Right cardiac atrium (tissue), 5 donors: ENCODE measurements at regions of chr17 and their contacts with region 1.

Region 1: GRCh38 chr17:77892469-77893143 is 65.9 kb upstream of the TNRC6C start:
- DNase-seq: peak in 2 of 3 donors; percentile 45 to 57
- ATAC-seq: no peak
- H3K4me3 ChIP-seq: no peak overlapping the region
- H3K27ac ChIP-seq: no peak overlapping the region
- H3K4me1 ChIP-seq: no peaks in the 10 kb centered on the region
- H3K27me3 ChIP-seq: no peaks in the 10 kb centered on the region

Region 2: DNA sequence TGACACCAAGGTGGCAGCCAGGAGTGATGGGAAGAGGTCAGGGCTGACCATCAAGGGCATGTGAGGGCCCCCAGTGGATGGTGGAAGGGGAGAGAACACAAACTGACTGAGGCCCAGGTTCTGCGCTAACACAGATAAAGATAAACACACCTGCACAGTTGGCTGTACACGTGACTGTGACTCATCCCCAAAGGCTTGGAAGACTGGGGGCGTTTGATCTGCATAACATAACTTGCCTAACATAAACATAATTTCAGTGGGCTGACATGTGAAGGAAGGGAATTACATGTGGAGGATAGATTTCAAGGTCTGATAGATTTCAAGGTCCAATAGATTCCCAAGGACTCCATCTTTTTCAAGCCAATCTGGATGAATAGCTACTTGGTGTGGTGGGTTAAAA is 35.0 kb before region 1 on chr17:
- intact Hi-C with region 1: no loop called
- DNase-seq: no peak
- ATAC-seq: no peak
- H3K4me3 ChIP-seq: no peak overlapping the region
- H3K27ac ChIP-seq: no peak overlapping the region
- H3K4me1 ChIP-seq: no peaks in the 10 kb centered on the region
- H3K27me3 ChIP-seq: no peaks in the 10 kb centered on the region

Region 3: DNA sequence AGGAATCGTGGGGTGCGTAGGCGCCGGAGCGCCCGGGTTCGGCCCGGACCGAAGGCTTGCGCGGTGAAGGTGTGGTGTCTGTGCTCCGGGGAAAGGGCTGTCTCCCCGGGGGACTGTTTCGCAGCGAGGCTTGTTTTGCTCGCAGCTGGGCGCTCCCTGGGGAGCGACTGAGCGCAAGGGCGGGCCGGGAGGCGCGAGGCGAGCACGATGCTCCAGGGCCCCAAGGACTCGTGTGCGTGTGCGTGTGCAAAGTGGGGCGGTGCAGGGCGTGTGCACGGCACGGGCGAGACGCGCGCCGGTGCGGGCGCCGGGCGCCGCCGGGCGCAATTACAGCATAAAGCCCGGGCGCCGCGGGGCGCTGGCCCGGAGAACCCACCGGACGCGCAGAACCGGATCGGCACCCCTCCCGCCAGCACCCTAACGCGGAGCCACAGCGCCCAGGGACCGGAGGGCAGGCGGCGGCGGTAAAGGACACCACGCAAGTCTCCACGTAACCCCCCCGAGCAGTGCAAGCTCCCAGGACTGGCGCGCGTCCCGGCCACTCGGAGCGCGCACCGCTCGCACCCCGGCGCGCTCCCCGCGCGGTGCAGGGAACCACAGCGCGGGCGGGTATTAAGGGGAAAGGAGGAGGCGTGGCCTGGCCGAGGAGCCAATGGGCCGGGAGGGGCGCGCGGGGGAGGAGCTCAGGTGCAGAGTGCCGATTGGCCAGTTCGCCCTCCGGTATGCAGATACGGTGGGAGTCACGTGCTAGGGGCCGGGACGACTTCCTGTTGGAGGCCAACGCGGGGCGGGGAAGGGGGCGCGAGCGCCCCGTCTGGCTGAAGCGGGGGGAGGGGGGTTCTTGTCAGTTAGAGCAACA is 65.5 kb after region 1 on chr17 and contains the start of gene TNRC6C:
- intact Hi-C with region 1: loop called in 1 of 4 experiments (anchors 5 kb)
- DNase-seq: peak; percentile 100
- ATAC-seq: peak; percentile 99
- H3K4me3 ChIP-seq: peak within 1 kb of the TSS; percentile 99
- H3K27ac ChIP-seq: peak within 1 kb of the TSS; percentile 94
- H3K4me1 ChIP-seq: peaks cover 8% of the 10 kb centered on the region
- H3K27me3 ChIP-seq: no peaks in the 10 kb centered on the region
- total RNA-seq, gene TNRC6C: 23.1 to 32.8 (median 25.6) TPM